ENCODE measurements at regions of chr6 and their contacts with region 1.

Region 1: GRCh38 chr6:133952815-133953633 is at the start of gene TBPL1:
- DNase-seq: peak; percentile 95
- H3K4me3 Mint-ChIP-seq: peak within 1 kb of the TSS; percentile 94
- H3K27ac Mint-ChIP-seq: peak within 1 kb of the TSS; percentile 88
- H3K4me1 Mint-ChIP-seq: peaks cover 36% of the 10 kb centered on the region
- H3K27me3 Mint-ChIP-seq: no peaks in the 10 kb centered on the region
- CTCF ChIP-seq: no peak
- total RNA-seq, gene TBPL1: 40.9 and 51.8 TPM in 2 replicates

Region 2: GRCh38 chr6:133707456-133707855 is 245.6 kb before region 1 on chr6:
- CTCF ChIA-PET with region 1: no interaction called
- POLR2A ChIA-PET with region 1: no interaction called
- intact Hi-C with region 1: no loop called
- DNase-seq: peak; percentile 28
- H3K4me3 Mint-ChIP-seq: no peak overlapping the region
- H3K27ac Mint-ChIP-seq: peak overlapping the region; percentile 69
- H3K4me1 Mint-ChIP-seq: peaks cover 35% of the 10 kb centered on the region
- H3K27me3 Mint-ChIP-seq: no peaks in the 10 kb centered on the region
- CTCF ChIP-seq: no peak

Region 3: GRCh38 chr6:133966654-133967329 is 13.8 kb after region 1 on chr6:
- CTCF ChIA-PET with region 1: interaction called, 3 read pairs
- POLR2A ChIA-PET with region 1: interaction called, 54 read pairs
- intact Hi-C with region 1: no loop called
- DNase-seq: no peak
- H3K4me3 Mint-ChIP-seq: no peak overlapping the region
- H3K27ac Mint-ChIP-seq: no peak overlapping the region
- H3K4me1 Mint-ChIP-seq: peaks cover 39% of the 10 kb centered on the region
- H3K27me3 Mint-ChIP-seq: no peaks in the 10 kb centered on the region
- CTCF ChIP-seq: no peak

Region 4: DNA sequence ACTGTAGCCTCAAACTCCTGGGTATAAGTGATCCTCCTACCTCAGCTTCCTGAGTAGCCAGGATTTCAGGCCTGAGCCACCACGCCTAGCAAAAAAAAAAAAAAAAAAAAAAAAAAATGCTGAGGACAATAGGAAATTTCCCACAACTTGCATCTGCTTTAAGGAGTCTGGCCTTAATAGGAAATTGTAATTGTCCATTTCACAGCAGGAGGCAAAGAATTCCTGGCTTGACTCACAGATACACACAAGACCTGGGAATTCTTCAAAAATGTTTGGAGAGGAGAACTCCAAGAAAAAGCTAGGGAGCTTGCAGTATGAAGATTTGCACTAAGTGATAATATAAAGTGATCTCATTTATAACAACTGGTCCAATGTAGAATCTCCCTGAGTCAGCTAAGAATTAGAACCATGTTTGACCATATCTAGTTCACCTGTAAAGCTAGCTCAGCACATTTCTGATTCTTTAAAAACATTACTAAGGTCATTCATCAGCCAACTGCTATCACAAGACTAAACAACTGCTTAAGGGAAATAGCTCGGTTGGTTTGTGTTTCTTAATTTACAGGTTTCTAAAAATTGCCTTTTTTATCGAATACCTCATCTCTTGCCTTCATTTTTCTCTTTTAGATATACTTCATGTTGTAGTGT is 179.6 kb after region 1 on chr6:
- CTCF ChIA-PET with region 1: no interaction called
- POLR2A ChIA-PET with region 1: no interaction called
- intact Hi-C with region 1: no loop called
- DNase-seq: peak; percentile 7
- H3K4me3 Mint-ChIP-seq: no peak overlapping the region
- H3K27ac Mint-ChIP-seq: no peak overlapping the region
- H3K4me1 Mint-ChIP-seq: no peaks in the 10 kb centered on the region
- H3K27me3 Mint-ChIP-seq: no peaks in the 10 kb centered on the region
- CTCF ChIP-seq: no peak